IMR-90 (cell line): ENCODE measurements at regions of chr14 and their contacts with region 1.

Region 1: GRCh38 chr14:75702616-75703261 is 41.7 kb downstream of the TTLL5 start:
- DNase-seq: peak; percentile 18
- ATAC-seq: no peak
- H3K4me3 ChIP-seq: no peak overlapping the region
- H3K27ac ChIP-seq: no peak overlapping the region
- H3K4me1 ChIP-seq: peaks cover 2% of the 10 kb centered on the region; the same call in 1 of the 2 replicates
- H3K27me3 ChIP-seq: no peaks in the 10 kb centered on the region
- CTCF ChIP-seq: no peak
- POLR2A ChIP-seq: no peak
- RAD21 ChIP-seq: no peak

Region 2: GRCh38 chr14:75915061-75915460 is 212.3 kb after region 1 on chr14:
- CTCF ChIA-PET with region 1: no interaction called
- POLR2A ChIA-PET with region 1: no interaction called
- dilution Hi-C with region 1: no loop called
- in situ Hi-C with region 1: no loop called
- intact Hi-C with region 1: no loop called
- DNase-seq: no peak
- ATAC-seq: no peak
- H3K4me3 ChIP-seq: no peak overlapping the region
- H3K27ac ChIP-seq: no peak overlapping the region
- H3K4me1 ChIP-seq: no peaks in the 10 kb centered on the region
- H3K27me3 ChIP-seq: no peaks in the 10 kb centered on the region
- CTCF ChIP-seq: no peak
- POLR2A ChIP-seq: no peak
- RAD21 ChIP-seq: no peak

Region 3: GRCh38 chr14:76168531-76168930 is 465.8 kb after region 1 on chr14:
- CTCF ChIA-PET with region 1: no interaction called
- POLR2A ChIA-PET with region 1: no interaction called
- dilution Hi-C with region 1: no loop called
- in situ Hi-C with region 1: no loop called
- intact Hi-C with region 1: loop called (anchors 5 kb)
- DNase-seq: peak; percentile 37
- ATAC-seq: no peak
- H3K4me3 ChIP-seq: no peak overlapping the region
- H3K27ac ChIP-seq: no peak overlapping the region
- H3K4me1 ChIP-seq: no peaks in the 10 kb centered on the region
- H3K27me3 ChIP-seq: no peaks in the 10 kb centered on the region
- CTCF ChIP-seq: no peak
- POLR2A ChIP-seq: no peak
- RAD21 ChIP-seq: no peak